ENCODE measurements at regions of chr1 and their contacts with region 1.

Region 1: GRCh38 chr1:156583821-156584622 is 4.5 kb downstream of the TTC24 start:
- DNase-seq: peak; percentile 40 to 63
- ATAC-seq: peak; percentile 71 to 75
- H3K4me3 ChIP-seq: no peak overlapping the region
- H3K27ac ChIP-seq: no peak overlapping the region
- H3K4me1 ChIP-seq: peaks cover 0 to 9% of the 10 kb centered on the region in 2 donors
- H3K27me3 ChIP-seq: no peaks in the 10 kb centered on the region
- CTCF ChIP-seq: peak; percentile 75 to 94 (median 90)
- POLR2A ChIP-seq: no peak

Region 2: DNA sequence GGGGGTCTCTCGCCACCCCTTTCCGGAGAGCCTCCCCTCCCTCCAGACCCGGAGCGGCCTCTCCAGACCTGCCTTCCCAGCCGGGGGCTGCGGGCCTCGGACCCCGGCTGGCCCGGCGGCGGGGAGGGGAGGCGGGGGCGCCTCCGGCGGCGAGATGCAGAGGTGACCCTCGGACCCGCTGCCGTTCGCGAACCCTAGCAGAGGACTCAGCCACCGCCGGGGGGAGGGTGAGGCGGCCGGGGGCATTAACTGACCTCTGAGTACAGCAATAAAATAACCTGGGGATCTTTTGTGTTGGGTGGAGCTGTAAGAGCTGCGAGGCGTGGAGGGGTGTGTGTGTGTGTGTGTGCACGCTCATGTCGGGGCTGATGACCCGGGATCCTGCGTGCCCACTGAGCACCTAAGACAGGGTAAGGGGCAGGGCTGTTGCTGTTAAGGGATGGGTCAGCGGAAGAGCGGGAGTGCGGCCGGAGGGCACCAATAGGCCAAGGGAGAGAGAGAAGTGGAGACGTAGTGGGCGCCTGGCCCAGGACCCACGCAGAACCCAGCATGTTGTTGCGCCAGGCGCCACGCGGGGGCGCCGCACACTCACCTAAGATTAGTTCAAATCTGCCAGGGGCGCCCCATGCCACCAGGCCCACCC is 41.5 kb after region 1 on chr1:
- in situ Hi-C with region 1: no loop called
- intact Hi-C with region 1: loop called (anchors 5 kb)
- DNase-seq: peak in 1 of 2 donors; percentile 25
- ATAC-seq: peak; percentile 40 to 45
- H3K4me3 ChIP-seq: peak overlapping the region; percentile 45 to 56 (median 53)
- H3K27ac ChIP-seq: peak overlapping the region; percentile 55 to 71 (median 63)
- H3K4me1 ChIP-seq: peaks cover 11 to 18% of the 10 kb centered on the region in 2 donors
- H3K27me3 ChIP-seq: peaks cover 28 to 32% (median 30%) of the 10 kb centered on the region in 3 donors
- CTCF ChIP-seq: peak; percentile 77 to 93 (median 84)
- POLR2A ChIP-seq: no peak

Region 3: DNA sequence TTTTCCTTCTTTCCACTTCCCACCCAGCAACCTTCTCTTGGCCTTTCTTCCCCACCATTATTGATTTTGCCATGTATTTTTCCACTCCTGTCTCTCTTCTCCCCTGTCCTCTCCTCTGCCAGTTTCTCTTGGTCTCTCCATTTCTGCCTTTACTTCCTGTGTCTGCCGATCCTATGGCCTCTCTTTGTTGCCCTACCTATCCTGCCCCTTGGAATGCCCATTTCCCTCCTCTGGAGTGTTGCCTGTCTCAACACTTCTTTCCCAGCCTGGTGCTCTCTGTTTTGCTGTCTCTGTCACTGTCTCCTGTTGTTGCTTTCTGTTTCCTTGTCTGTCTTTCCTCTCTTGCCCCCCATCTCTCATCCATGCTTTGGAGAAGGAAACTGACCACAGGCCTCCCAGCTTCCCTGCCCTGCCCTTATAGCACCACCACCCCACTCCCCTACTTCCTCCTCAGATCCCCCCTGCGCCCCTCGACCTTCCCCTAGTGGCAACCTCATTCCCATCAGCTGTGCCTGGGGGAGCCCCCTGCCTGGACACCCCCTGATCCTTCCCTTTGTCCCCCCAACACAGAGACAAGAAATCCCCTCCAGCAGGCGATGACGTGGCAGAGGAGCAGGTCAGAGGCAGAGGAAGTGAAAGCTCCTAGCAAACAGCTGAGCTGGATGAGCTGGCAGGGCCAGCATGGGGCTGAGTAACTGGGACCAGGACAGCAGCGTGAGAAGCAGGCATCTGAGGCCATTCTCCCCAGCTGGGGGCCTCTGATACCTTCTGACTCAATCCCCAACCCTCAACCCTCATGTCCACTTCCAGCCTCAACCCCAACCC is 522.2 kb after region 1 on chr1:
- in situ Hi-C with region 1: no loop called
- intact Hi-C with region 1: no loop called
- DNase-seq: no peak
- ATAC-seq: no peak
- H3K4me3 ChIP-seq: no peak overlapping the region
- H3K27ac ChIP-seq: no peak overlapping the region
- H3K4me1 ChIP-seq: no peaks in the 10 kb centered on the region
- H3K27me3 ChIP-seq: peaks cover 17 to 19% (median 19%) of the 10 kb centered on the region in 3 donors
- CTCF ChIP-seq: no peak
- POLR2A ChIP-seq: no peak

Measured in gastrocnemius medialis (tissue), 4 donors.